ENCODE measurements at regions of chr12 and their contacts with region 1.

Region 1: DNA sequence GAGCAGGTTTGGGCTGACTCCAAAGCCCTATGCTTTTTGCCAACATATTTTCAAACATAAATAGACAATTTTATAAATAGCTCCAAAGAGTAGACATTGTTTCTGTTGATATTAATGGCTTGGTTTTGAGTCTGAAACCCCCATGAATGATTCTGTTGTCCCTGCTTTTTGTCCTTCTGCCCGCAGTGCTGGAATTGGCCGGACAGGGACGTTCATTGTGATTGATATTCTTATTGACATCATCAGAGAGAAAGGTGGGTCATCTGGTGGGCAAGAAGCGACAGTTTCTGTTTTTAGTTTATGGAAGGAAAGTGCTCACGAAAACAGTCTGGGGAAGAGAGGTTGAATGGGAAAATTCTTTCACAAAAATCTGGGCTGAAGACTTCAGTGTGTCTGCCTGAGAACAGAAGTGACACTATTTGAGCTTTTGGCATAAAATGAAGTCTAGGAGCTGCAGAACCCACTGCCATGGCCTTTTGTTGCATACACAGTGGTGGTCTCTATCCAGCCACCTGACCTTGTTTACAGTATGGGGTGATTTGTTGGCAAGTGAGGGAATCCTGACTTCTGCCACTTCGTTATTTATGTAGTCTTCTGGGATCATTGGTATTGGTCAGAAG is 69.6 kb downstream of the PTPN11 start:
- DNase-seq: no peak
- H3K4me3 ChIP-seq: peak overlapping the region in 3 of 59 donors; percentile 13 to 24 (median 23)
- H3K27ac ChIP-seq: peak overlapping the region in 56 of 59 donors; percentile 10 to 91 (median 79)
- H3K27me3 ChIP-seq: no peaks in the 10 kb centered on the region
- CTCF ChIP-seq: peak in 1 of 56 donors; percentile 12

Region 2: GRCh38 chr12:112456029-112456428 is 32.3 kb before region 1 on chr12:
- intact Hi-C with region 1: loop called in 1 of 2 experiments (anchors 2 kb)
- DNase-seq: peak in 2 of 10 donors; percentile 24 to 31
- H3K4me3 ChIP-seq: peak overlapping the region in 34 of 59 donors; percentile 0 to 58 (median 28)
- H3K27ac ChIP-seq: peak overlapping the region in 33 of 59 donors; percentile 5 to 76 (median 37)
- H3K27me3 ChIP-seq: no peaks in the 10 kb centered on the region
- CTCF ChIP-seq: peak in 2 of 56 donors; percentile 22 to 23

Region 3: GRCh38 chr12:112828541-112828940 is 340.2 kb after region 1 on chr12:
- intact Hi-C with region 1: no loop called
- DNase-seq: no peak
- H3K4me3 ChIP-seq: no peak overlapping the region
- H3K27ac ChIP-seq: no peak overlapping the region
- H3K27me3 ChIP-seq: peaks cover 0 to 27% (median 0%) of the 10 kb centered on the region in 45 donors
- CTCF ChIP-seq: no peak